ENCODE measurements at regions of chr22 and their contacts with region 1.

Region 1: GRCh38 chr22:41666661-41667258 is 21.9 kb downstream of the SNU13 start:
- H3K4me3 Mint-ChIP-seq: peak overlapping the region; percentile 76
- H3K27ac Mint-ChIP-seq: peak overlapping the region; percentile 94
- H3K4me1 Mint-ChIP-seq: peaks cover 12% of the 10 kb centered on the region
- H3K27me3 Mint-ChIP-seq: no peaks in the 10 kb centered on the region

Region 2: DNA sequence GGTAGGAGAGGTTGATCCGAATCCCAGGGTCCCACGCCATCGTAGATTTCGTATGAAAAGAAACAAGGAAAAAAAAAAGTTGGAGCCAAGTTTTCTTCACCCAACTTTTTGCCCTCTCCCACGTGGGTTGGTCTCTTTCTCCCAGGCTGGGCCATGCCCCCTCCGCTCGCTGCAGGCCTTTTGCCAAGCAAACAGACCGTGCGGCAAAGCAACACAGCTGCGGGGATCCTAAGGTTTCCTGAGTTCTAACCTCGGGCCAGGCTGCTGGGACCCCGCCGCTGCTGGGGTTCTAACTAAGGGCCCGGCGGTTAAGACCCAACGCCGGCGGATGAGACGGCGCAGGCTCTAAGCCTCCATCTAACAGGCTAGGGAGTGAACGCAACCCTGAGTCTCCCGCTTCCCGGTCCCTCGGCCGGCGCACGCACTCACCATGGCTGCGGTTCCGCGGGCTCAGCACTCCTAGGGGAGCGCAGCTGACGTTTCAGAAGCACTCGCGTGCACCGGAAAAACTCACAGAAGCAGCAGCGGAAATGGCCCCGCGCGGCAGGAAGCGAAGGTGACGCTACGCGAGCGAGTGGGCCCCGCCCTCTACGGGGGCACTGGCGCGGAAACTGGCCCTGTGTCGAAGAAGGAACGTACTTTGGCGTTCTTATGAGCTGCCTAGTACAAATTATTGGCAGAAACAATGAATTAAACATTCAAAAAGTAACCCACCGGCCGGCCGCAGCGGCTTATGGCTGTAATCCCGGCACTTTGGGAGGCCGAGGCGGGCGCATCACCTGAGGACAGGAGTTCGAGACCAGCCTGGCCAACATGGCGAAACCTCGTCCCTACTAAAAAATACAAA is 21.8 kb after region 1 on chr22 and contains the start of gene SNU13:
- intact Hi-C with region 1: loop called (anchors 2 kb)
- H3K4me3 Mint-ChIP-seq: peak within 1 kb of the TSS; percentile 91
- H3K27ac Mint-ChIP-seq: peak within 1 kb of the TSS; percentile 98
- H3K4me1 Mint-ChIP-seq: peaks cover 15% of the 10 kb centered on the region
- H3K27me3 Mint-ChIP-seq: no peaks in the 10 kb centered on the region